ENCODE measurements at regions of chr1 and their contacts with region 1.

Region 1: DNA sequence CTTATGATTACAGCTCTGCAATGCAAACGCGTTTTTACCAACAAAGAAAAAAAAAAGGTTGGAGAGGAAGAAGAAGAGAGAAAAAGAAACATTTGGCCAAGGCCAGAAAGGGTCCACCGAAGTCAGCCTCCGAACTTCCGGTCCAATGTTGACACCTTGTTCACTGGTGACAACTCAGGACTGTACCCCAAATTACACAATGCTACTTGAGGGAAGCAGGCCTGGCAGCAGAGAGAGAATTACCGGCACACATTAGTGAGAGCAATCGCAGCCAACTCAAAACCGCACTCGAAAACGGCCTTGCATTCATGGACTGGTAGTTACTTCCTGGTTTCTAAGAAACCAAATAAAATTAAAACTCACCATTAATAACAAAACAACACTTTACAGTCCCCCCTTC is 652.5 kb downstream of the KIF26B start:
- DNase-seq: peak; percentile 80
- ATAC-seq: peak; percentile 91
- H3K4me3 ChIP-seq: peak overlapping the region; percentile 37; the same call in 1 of the 2 replicates
- H3K27ac ChIP-seq: peak overlapping the region; percentile 41
- H3K4me1 ChIP-seq: peaks cover 45% of the 10 kb centered on the region
- H3K27me3 ChIP-seq: no peaks in the 10 kb centered on the region
- CTCF ChIP-seq: no peak
- EP300 ChIP-seq: no peak
- POLR2A ChIP-seq: no peak
- RAD21 ChIP-seq: no peak

Region 2: GRCh38 chr1:245742896-245743295 is 64.4 kb before region 1 on chr1:
- CTCF ChIA-PET with region 1: no interaction called
- POLR2A ChIA-PET with region 1: no interaction called
- RAD21 ChIA-PET with region 1: no interaction called
- SMC1A ChIA-PET with region 1: no interaction called
- in situ Hi-C with region 1: no loop called
- intact Hi-C with region 1: loop called (anchors 10 kb)
- DNase-seq: no peak
- ATAC-seq: no peak
- H3K4me3 ChIP-seq: no peak overlapping the region
- H3K27ac ChIP-seq: no peak overlapping the region
- H3K4me1 ChIP-seq: no peaks in the 10 kb centered on the region
- H3K27me3 ChIP-seq: no peaks in the 10 kb centered on the region
- CTCF ChIP-seq: no peak
- EP300 ChIP-seq: no peak
- POLR2A ChIP-seq: no peak
- RAD21 ChIP-seq: no peak

Region 3: DNA sequence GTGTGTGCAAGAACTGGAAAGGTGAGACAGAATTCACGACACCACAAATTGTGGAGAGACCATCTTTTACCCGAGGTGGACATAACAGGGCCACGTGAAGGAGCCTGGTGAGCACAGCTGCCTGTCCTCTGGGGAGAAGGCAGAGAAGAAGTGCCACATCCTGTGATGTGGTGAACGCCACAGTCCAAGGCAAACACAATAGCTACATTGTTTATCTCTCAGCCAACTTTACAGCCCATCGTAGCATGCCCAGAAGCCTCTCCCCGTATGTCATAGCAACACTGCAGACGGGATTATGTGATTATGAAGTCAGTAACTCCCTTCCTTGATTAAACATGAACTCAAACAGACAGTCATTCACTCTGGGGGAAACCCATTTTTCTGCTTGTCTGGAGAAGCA is 87.5 kb after region 1 on chr1:
- CTCF ChIA-PET with region 1: interaction called, 3 read pairs
- POLR2A ChIA-PET with region 1: interaction called, 4 read pairs
- RAD21 ChIA-PET with region 1: interaction called, 10 read pairs
- SMC1A ChIA-PET with region 1: interaction called, 5 read pairs
- in situ Hi-C with region 1: no loop called
- intact Hi-C with region 1: no loop called
- DNase-seq: peak; percentile 59
- ATAC-seq: peak; percentile 95
- H3K4me3 ChIP-seq: no peak overlapping the region
- H3K27ac ChIP-seq: peak overlapping the region; percentile 47
- H3K4me1 ChIP-seq: peaks cover 4% of the 10 kb centered on the region; the same call in 1 of the 2 replicates
- H3K27me3 ChIP-seq: no peaks in the 10 kb centered on the region
- CTCF ChIP-seq: no peak
- EP300 ChIP-seq: peak; percentile 48 to 67; a peak in 2 of 4 replicates
- POLR2A ChIP-seq: no peak
- RAD21 ChIP-seq: no peak

Region 4: GRCh38 chr1:246051909-246052516 is 244.7 kb after region 1 on chr1:
- CTCF ChIA-PET with region 1: no interaction called
- POLR2A ChIA-PET with region 1: no interaction called
- RAD21 ChIA-PET with region 1: no interaction called
- SMC1A ChIA-PET with region 1: no interaction called
- in situ Hi-C with region 1: no loop called
- intact Hi-C with region 1: no loop called
- DNase-seq: no peak
- ATAC-seq: no peak
- H3K4me3 ChIP-seq: no peak overlapping the region
- H3K27ac ChIP-seq: no peak overlapping the region
- H3K4me1 ChIP-seq: no peaks in the 10 kb centered on the region
- H3K27me3 ChIP-seq: no peaks in the 10 kb centered on the region
- CTCF ChIP-seq: no peak
- EP300 ChIP-seq: no peak
- POLR2A ChIP-seq: no peak
- RAD21 ChIP-seq: no peak

Region 5: DNA sequence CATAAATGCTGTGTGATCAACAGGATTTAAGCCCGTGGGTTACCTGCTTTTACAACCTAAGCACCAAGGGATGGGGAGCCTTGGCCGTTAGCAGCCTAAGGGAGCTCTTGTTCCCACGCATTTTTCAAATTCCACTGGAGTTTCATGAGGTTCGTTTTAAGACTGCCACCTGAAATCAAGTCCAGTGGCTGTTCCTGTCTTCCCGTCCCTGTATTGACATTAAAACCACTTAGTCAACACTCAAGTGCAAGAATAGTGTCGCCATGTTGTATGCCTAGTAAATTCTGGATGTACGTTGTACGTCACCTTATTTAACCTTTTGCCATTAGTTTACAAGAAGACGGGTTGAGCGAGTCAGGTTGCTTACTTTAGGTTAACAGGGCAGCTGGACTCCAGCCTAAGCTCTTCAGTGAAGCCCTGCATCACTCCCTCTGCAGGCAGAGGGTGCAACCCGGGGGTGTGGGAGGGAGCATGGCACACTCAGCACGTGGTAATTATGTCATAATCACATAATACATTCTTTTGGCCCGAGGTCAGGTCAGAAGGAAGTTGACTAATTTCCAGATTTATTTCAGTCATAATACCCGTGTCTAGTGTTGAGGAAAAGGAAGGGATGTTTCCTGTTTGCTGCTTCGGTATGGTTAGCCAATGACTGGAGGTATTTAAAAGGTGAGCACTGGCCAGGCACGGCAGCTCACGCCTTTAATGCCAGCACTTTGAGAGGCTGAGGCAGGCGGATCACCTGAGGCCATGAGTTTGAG is 801.5 kb after region 1 on chr1:
- CTCF ChIA-PET with region 1: no interaction called
- POLR2A ChIA-PET with region 1: no interaction called
- RAD21 ChIA-PET with region 1: no interaction called
- SMC1A ChIA-PET with region 1: no interaction called
- in situ Hi-C with region 1: no loop called
- intact Hi-C with region 1: no loop called
- DNase-seq: no peak
- ATAC-seq: peak; percentile 79
- H3K4me3 ChIP-seq: no peak overlapping the region
- H3K27ac ChIP-seq: no peak overlapping the region
- H3K4me1 ChIP-seq: no peaks in the 10 kb centered on the region; the same call in 1 of the 2 replicates
- H3K27me3 ChIP-seq: no peaks in the 10 kb centered on the region
- CTCF ChIP-seq: no peak
- EP300 ChIP-seq: no peak
- POLR2A ChIP-seq: no peak
- RAD21 ChIP-seq: no peak

Measured in GM12878 (cell line).